ENCODE measurements at regions of chr7 and their contacts with region 1.

Region 1: DNA sequence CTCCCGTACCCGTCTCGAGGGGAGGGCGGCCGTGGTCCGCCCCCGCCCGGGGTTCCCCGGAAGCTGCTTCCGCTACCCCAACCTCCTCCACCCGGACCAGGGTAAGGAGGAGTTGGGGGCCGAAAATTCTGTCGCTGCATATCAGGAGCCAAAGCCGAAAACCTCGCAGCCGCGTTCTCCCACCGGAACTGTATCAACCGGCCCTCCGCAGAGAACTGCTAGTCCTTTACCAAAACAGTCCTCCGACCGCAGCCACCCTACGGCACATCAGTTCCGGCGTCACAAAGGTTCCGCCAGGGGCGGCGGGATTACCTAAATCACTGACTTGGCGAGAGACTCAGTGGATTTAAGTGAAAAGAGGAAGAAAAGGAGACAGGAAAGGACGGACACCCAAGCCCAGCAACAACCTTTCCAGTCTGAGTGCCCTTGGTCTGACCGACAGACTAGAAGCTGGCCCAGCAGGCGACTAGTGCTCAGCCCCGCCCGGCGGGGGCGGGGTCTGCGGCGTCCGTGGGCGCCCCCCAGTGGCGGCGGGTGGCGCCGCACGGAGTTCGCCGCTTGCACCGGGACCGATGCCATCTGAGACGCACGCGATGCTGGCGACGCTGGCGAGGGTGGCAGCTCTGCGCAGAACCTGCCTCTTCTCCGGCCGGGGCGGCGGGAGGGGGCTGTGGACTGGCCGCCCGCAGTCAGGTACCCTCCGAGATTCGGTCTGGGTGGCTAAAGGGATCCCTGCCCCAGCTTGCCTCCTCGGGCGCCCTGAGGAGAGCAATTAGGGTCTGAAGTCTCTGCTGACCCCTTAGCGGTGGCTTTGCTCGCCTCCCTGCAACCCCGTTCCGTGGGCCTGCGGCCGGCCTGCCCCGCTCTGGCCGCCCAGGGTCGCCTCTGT is at the starts of genes MPLKIP and SUGCT:
- DNase-seq: peak; percentile 80 to 90
- H3K4me3 ChIP-seq: peak within 1 kb of the TSS; percentile 97
- H3K27ac ChIP-seq: peak within 1 kb of the TSS; percentile 75
- H3K4me1 ChIP-seq: peaks cover 17% of the 10 kb centered on the region
- H3K27me3 ChIP-seq: no peaks in the 10 kb centered on the region
- CTCF ChIP-seq: peak; percentile 99
- total RNA-seq, gene MPLKIP: 76.0 and 79.2 TPM in 2 replicates
- total RNA-seq, gene SUGCT: 2.7 and 3.5 TPM in 2 replicates

Region 2: GRCh38 chr7:40057292-40057691 is 77.4 kb before region 1 on chr7:
- CTCF ChIA-PET with region 1: no interaction called
- POLR2A ChIA-PET with region 1: no interaction called
- intact Hi-C with region 1: no loop called
- DNase-seq: no peak
- H3K4me3 ChIP-seq: no peak overlapping the region
- H3K27ac ChIP-seq: no peak overlapping the region
- H3K4me1 ChIP-seq: no peaks in the 10 kb centered on the region
- H3K27me3 ChIP-seq: no peaks in the 10 kb centered on the region
- CTCF ChIP-seq: no peak

Region 3: GRCh38 chr7:40120020-40120419 is 14.7 kb before region 1 on chr7:
- CTCF ChIA-PET with region 1: interaction called, 3 read pairs
- POLR2A ChIA-PET with region 1: interaction called, 5 read pairs
- intact Hi-C with region 1: loop called (anchors 1 kb)
- DNase-seq: no peak
- H3K4me3 ChIP-seq: no peak overlapping the region
- H3K27ac ChIP-seq: no peak overlapping the region
- H3K4me1 ChIP-seq: peaks cover 31% of the 10 kb centered on the region
- H3K27me3 ChIP-seq: no peaks in the 10 kb centered on the region
- CTCF ChIP-seq: no peak

Region 4: GRCh38 chr7:40221836-40222235 is 87.2 kb after region 1 on chr7:
- CTCF ChIA-PET with region 1: no interaction called
- POLR2A ChIA-PET with region 1: no interaction called
- intact Hi-C with region 1: loop called (anchors 2 kb)
- DNase-seq: peak in 1 of 2 experiments; percentile 49
- H3K4me3 ChIP-seq: no peak overlapping the region
- H3K27ac ChIP-seq: no peak overlapping the region
- H3K4me1 ChIP-seq: peaks cover 17% of the 10 kb centered on the region
- H3K27me3 ChIP-seq: no peaks in the 10 kb centered on the region
- CTCF ChIP-seq: no peak

Region 5: DNA sequence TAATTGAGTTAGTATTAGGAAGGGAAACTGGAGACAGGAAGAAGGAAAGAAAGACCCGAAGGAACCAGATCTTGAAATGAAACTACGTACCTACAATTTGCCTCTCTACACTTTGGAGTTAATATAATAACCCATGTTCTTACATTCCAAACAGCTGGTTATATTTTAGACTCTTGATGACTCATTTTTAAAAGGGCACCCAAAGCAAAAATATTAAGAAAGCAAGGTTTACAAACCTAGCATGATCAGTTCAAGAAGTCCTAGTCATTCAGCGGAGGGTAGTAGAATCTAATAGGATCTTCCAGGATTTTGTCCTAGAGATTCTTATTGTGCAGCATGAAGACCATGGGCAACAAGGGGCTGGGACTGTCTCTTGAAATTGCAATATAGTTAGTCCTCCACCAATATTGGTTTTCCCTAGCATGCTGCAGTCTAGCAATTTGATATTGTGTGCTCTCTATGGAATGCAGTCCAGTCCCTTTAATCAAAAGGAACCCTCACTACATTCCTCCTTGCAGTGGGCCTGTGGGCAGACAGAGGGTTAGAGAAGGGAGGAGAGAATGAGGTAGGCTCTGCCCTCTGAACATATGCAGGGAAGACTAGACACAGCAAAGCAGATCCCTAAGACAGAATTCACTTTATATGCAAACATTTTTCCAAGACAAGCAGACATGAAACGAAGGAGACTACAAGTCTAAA is 1337.9 kb after region 1 on chr7:
- CTCF ChIA-PET with region 1: no interaction called
- POLR2A ChIA-PET with region 1: interaction called, 28 read pairs
- intact Hi-C with region 1: no loop called
- DNase-seq: peak in 1 of 2 experiments; percentile 8
- H3K4me3 ChIP-seq: no peak overlapping the region
- H3K27ac ChIP-seq: no peak overlapping the region
- H3K4me1 ChIP-seq: no peaks in the 10 kb centered on the region
- H3K27me3 ChIP-seq: no peaks in the 10 kb centered on the region
- CTCF ChIP-seq: no peak